ENCODE measurements at regions of chr1 and their contacts with region 1.

Region 1: GRCh38 chr1:33295450-33296081 is 25.3 kb downstream of the A3GALT2 start:
- DNase-seq: peak; percentile 73
- ATAC-seq: peak; percentile 86
- H3K4me3 ChIP-seq: no peak overlapping the region
- H3K27ac ChIP-seq: no peak overlapping the region
- H3K4me1 ChIP-seq: peaks cover 1% of the 10 kb centered on the region; the same call in 1 of the 2 replicates
- H3K27me3 ChIP-seq: no peaks in the 10 kb centered on the region
- CTCF ChIP-seq: peak; percentile 94
- POLR2A ChIP-seq: 0 out of 2 replicates have a peak, but pooled peaks have one; percentile 32
- RAD21 ChIP-seq: peak; percentile 89

Region 2: GRCh38 chr1:32925403-32926162 is 370.0 kb before region 1 on chr1:
- CTCF ChIA-PET with region 1: no interaction called
- POLR2A ChIA-PET with region 1: no interaction called
- dilution Hi-C with region 1: no loop called
- in situ Hi-C with region 1: no loop called
- intact Hi-C with region 1: no loop called
- DNase-seq: no peak
- ATAC-seq: peak; percentile 54
- H3K4me3 ChIP-seq: no peak overlapping the region
- H3K27ac ChIP-seq: no peak overlapping the region
- H3K4me1 ChIP-seq: no peaks in the 10 kb centered on the region
- H3K27me3 ChIP-seq: peaks cover 2% of the 10 kb centered on the region
- CTCF ChIP-seq: no peak
- POLR2A ChIP-seq: no peak
- RAD21 ChIP-seq: no peak

Region 3: DNA sequence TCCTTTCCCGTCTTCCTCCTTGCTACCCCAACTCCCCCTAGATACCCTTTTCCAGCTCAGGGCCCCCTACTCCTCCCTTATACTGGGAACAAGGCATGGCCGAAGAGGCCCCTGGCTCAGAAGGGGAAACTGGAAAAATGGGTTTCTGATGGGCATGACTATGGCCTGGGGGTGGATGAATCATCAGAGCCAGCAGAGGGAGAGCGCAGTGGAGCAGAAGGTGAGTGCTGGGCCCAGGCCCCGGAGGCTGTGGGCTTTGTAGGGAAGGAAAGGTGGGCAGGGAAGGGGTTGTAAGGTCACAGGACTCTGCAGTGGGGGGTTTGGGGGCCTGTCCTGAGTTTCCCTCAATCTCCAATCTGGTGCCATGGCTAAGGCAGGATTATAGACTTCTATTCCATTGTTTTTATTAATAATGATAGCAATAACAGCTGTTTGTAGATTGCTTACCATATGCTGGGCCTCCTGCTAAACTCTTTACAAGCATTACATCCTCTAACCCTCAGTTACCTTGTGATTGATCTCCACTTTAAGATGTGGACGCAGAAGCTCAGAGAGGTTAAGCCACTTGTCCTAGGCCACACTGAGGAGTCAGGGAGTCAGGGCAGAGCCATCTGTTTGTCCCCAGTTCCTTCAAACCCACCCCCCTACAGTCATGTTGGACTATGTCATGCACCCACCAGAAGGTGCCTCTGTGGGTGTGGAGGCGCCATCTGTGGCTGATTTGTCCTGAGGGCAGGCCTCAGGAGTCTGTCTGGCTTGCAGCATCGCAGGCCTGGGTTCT is 75.5 kb before region 1 on chr1:
- CTCF ChIA-PET with region 1: interaction called, 12 read pairs
- POLR2A ChIA-PET with region 1: no interaction called
- dilution Hi-C with region 1: no loop called
- in situ Hi-C with region 1: no loop called
- intact Hi-C with region 1: loop called (anchors 5 kb)
- DNase-seq: peak; percentile 45
- ATAC-seq: peak; percentile 56; the same call in 1 of the 2 replicates
- H3K4me3 ChIP-seq: no peak overlapping the region
- H3K27ac ChIP-seq: no peak overlapping the region
- H3K4me1 ChIP-seq: peaks cover 10% of the 10 kb centered on the region
- H3K27me3 ChIP-seq: peaks cover 4% of the 10 kb centered on the region; the same call in 1 of the 2 replicates
- CTCF ChIP-seq: no peak
- POLR2A ChIP-seq: no peak
- RAD21 ChIP-seq: no peak

Region 4: GRCh38 chr1:33349778-33350610 is 54.4 kb after region 1 on chr1:
- CTCF ChIA-PET with region 1: interaction called, 3 read pairs
- POLR2A ChIA-PET with region 1: no interaction called
- dilution Hi-C with region 1: no loop called
- in situ Hi-C with region 1: no loop called
- intact Hi-C with region 1: loop called (anchors 5 kb)
- DNase-seq: peak; percentile 72
- ATAC-seq: peak; percentile 82
- H3K4me3 ChIP-seq: peak overlapping the region; percentile 98
- H3K27ac ChIP-seq: peak overlapping the region; percentile 86
- H3K4me1 ChIP-seq: peaks cover 10% of the 10 kb centered on the region
- H3K27me3 ChIP-seq: no peaks in the 10 kb centered on the region
- CTCF ChIP-seq: no peak
- POLR2A ChIP-seq: peak; percentile 71; the same call in 1 of the 2 replicates
- RAD21 ChIP-seq: no peak

Region 5: DNA sequence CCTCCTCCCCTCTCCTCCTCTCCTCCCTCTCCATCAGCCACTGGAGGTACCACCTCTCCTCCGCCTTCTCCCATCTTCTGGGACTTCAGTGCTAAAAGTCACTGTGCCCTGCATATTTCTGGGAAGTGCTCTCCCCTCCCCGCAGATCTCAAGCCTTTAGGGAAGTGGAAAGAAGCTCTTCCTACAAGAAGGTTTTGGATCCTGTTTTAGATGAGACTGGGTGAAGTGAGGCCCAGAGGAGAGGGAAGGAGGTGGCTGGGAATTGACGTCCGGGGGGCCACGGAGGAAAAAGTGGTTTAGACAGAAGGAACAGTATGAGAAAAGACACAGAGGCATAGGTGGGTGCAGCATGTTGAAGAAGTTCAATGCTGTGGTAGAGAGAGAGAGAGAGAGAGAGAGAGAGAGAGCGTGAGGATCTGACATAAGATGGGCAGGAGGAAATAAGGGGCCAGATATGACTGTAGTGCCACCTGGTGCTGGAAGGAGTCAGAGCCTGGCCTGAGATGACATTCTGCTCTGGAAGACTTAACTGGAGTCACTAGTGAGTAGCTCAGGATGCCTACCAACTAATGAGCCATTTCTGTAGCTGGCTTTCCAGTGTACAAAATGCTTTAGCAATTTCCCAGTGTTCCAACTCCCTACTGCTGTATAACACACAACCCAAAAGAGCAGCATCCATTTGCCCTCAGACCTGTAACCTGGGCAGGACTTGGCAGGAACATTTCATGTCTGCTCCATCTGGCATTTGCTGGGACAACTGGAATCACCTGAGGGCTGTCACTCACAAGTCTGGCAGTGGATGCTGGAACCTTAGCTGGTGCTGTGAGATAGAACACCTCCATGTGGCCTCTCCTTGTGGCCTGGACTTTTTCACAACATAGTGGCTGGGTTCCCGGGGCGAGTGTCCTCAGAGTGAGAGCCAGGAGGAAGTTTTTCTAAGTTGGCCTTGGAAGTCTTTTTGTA is 160.3 kb after region 1 on chr1:
- CTCF ChIA-PET with region 1: interaction called, 6 read pairs
- POLR2A ChIA-PET with region 1: no interaction called
- dilution Hi-C with region 1: no loop called
- in situ Hi-C with region 1: no loop called
- intact Hi-C with region 1: loop called (anchors 1 kb)
- DNase-seq: peak; percentile 90
- ATAC-seq: peak; percentile 86
- H3K4me3 ChIP-seq: no peak overlapping the region
- H3K27ac ChIP-seq: no peak overlapping the region
- H3K4me1 ChIP-seq: peaks cover 16% of the 10 kb centered on the region
- H3K27me3 ChIP-seq: no peaks in the 10 kb centered on the region
- CTCF ChIP-seq: peak; percentile 93
- POLR2A ChIP-seq: 0 out of 2 replicates have a peak, but pooled peaks have one; percentile 24
- RAD21 ChIP-seq: peak; percentile 93

Region 6: GRCh38 chr1:33466159-33466558 is 170.6 kb after region 1 on chr1:
- CTCF ChIA-PET with region 1: interaction called, 26 read pairs
- POLR2A ChIA-PET with region 1: no interaction called
- dilution Hi-C with region 1: no loop called
- in situ Hi-C with region 1: loop called (anchors 5 kb)
- intact Hi-C with region 1: loop called (anchors 1 kb)
- DNase-seq: no peak
- ATAC-seq: no peak
- H3K4me3 ChIP-seq: no peak overlapping the region
- H3K27ac ChIP-seq: no peak overlapping the region
- H3K4me1 ChIP-seq: peaks cover 14% of the 10 kb centered on the region; the same call in 1 of the 2 replicates
- H3K27me3 ChIP-seq: no peaks in the 10 kb centered on the region
- CTCF ChIP-seq: no peak
- POLR2A ChIP-seq: no peak
- RAD21 ChIP-seq: no peak

Region 7: GRCh38 chr1:33616773-33617172 is 321.2 kb after region 1 on chr1:
- CTCF ChIA-PET with region 1: no interaction called
- POLR2A ChIA-PET with region 1: no interaction called
- dilution Hi-C with region 1: no loop called
- in situ Hi-C with region 1: loop called (anchors 10 kb)
- intact Hi-C with region 1: loop called (anchors 1 kb)
- DNase-seq: no peak
- ATAC-seq: no peak
- H3K4me3 ChIP-seq: no peak overlapping the region
- H3K27ac ChIP-seq: no peak overlapping the region
- H3K4me1 ChIP-seq: no peaks in the 10 kb centered on the region
- H3K27me3 ChIP-seq: peaks cover 8% of the 10 kb centered on the region
- CTCF ChIP-seq: no peak
- POLR2A ChIP-seq: no peak
- RAD21 ChIP-seq: no peak